Posterior cingulate gyrus (tissue), 11 donors: ENCODE measurements at regions of chr1 and their contacts with region 1.

Region 1: GRCh38 chr1:59296358-59297256 is at the start of gene FGGY:
- DNase-seq: peak; percentile 84 to 99 (median 93)

Region 2: GRCh38 chr1:59150577-59151391 is 145.8 kb before region 1 on chr1:
- intact Hi-C with region 1: loop called (anchors 5 kb)
- DNase-seq: peak in 7 of 10 donors; percentile 13 to 88 (median 55)